ENCODE measurements at regions of chr1 and their contacts with region 1.

Region 1: GRCh38 chr1:183148599-183148998 is 37.5 kb upstream of the LAMC2 start:
- DNase-seq: no peak
- ATAC-seq: peak in 7 of 8 donors; percentile 58 to 81 (median 70)
- H3K4me3 ChIP-seq: no peak overlapping the region
- H3K27ac ChIP-seq: peak overlapping the region in 8 of 10 donors; percentile 24 to 74 (median 38)
- H3K4me1 ChIP-seq: peaks cover 0 to 20% (median 14%) of the 10 kb centered on the region in 9 donors
- H3K27me3 ChIP-seq: no peaks in the 10 kb centered on the region
- CTCF ChIP-seq: no peak

Region 2: DNA sequence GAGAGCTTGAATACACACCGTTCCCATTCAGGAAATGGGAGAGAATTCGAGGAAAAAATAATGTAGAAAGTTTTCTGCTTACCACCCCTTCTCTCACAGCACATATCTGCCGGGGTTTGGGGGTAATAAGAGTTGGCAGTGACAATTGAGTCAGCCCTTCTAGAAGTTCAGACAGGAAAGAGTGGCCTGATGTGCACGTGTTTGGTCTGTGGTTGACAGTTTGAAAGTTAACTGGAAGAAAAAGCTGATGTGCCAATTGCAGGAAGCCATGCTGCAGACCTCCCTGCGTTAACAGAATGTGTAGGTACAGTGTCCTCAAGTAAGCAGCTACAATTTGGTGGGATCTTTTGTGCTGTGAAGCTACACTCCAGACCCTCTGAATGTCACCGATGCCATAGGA is 258.6 kb before region 1 on chr1:
- intact Hi-C with region 1: loop called in 1 of 10 experiments (anchors 10 kb)
- DNase-seq: no peak
- ATAC-seq: no peak
- H3K4me3 ChIP-seq: no peak overlapping the region
- H3K27ac ChIP-seq: no peak overlapping the region
- H3K4me1 ChIP-seq: peaks cover 0 to 9% (median 0%) of the 10 kb centered on the region in 9 donors
- H3K27me3 ChIP-seq: no peaks in the 10 kb centered on the region
- CTCF ChIP-seq: no peak

Region 3: DNA sequence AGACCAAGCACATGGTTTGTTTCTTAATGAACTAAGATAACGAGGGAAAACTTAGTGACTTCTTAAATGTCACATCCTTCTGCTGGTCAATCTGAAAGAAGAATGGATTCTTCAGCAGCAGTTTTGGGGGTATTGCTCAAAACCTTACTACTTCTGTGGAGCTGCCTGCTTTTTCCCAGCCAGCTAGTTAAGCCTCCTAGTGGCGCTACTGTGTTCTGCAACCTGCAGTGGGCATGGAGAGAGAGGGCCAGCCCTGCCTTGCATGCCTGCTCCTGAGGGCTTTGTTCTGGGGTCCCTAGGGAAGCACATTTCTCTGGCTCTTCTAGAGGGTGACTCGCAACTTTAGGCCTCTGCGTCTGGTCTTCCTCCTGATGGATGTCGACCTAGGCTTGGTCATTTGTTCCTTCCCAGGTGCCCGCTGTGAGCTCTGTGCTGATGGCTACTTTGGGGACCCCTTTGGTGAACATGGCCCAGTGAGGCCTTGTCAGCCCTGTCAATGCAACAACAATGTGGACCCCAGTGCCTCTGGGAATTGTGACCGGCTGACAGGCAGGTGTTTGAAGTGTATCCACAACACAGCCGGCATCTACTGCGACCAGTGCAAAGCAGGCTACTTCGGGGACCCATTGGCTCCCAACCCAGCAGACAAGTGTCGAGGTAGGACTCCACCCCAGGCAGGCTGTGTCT is 79.5 kb after region 1 on chr1:
- intact Hi-C with region 1: loop called in 5 of 10 experiments (anchors 5 to 10 kb)
- DNase-seq: peak; percentile 44 to 45
- ATAC-seq: peak in 6 of 8 donors; percentile 61 to 83 (median 73)
- H3K4me3 ChIP-seq: no peak overlapping the region
- H3K27ac ChIP-seq: no peak overlapping the region
- H3K4me1 ChIP-seq: peaks cover 0 to 10% (median 0%) of the 10 kb centered on the region in 9 donors
- H3K27me3 ChIP-seq: no peaks in the 10 kb centered on the region
- CTCF ChIP-seq: peak; percentile 46 to 86 (median 79)

Region 4: GRCh38 chr1:183234660-183235476 is 86.3 kb after region 1 on chr1:
- intact Hi-C with region 1: loop called in 1 of 10 experiments (anchors 10 kb)
- DNase-seq: peak; percentile 34 to 69
- ATAC-seq: peak; percentile 86 to 94 (median 90)
- H3K4me3 ChIP-seq: peak overlapping the region in 9 of 10 donors; percentile 1 to 42 (median 33)
- H3K27ac ChIP-seq: peak overlapping the region; percentile 47 to 88 (median 72)
- H3K4me1 ChIP-seq: peaks cover 0 to 32% (median 19%) of the 10 kb centered on the region in 9 donors
- H3K27me3 ChIP-seq: no peaks in the 10 kb centered on the region
- CTCF ChIP-seq: peak; percentile 35 to 72 (median 61)

Measured in heart right ventricle (tissue), 16 donors.